Activated CD8-positive, alpha-beta T cell treated with anti-CD3 and anti-CD28 coated beads, Interleukin-2, amount 10 ng/mL, durations not matched to agents 7 days and 5 days (primary cell): ENCODE measurements at regions of chr18 and their contacts with region 1.

Region 1: GRCh38 chr18:63155169-63155852 is 164.3 kb downstream of the BCL2 start:
- DNase-seq: peak; percentile 87
- ATAC-seq: peak; percentile 78
- H3K4me3 Mint-ChIP-seq: peak overlapping the region; percentile 78
- H3K27ac Mint-ChIP-seq: peak overlapping the region; percentile 93
- H3K4me1 Mint-ChIP-seq: peaks cover 98% of the 10 kb centered on the region
- H3K27me3 Mint-ChIP-seq: no peaks in the 10 kb centered on the region

Region 2: DNA sequence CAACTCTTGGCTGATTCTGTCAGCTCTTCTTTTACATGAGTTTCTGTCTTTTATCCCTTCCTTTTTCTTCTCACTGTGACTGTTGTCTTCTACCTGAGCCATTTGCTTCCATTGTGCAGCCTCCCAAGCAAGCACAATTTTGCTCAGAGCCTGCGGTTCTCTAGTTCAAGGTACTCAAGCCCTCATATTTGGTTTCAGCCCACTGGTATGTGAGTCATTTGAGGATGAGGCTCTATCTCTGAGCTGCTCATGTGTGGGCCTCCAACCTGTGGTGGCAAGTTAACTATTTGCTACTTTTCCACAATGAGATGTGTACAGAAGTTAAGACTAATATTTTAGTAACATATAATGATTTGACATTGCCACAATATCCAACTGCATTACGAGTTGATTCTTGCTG is 257.0 kb before region 1 on chr18:
- CTCF ChIA-PET with region 1: no interaction called
- POLR2A ChIA-PET with region 1: no interaction called
- DNase-seq: no peak
- ATAC-seq: no peak
- H3K4me3 Mint-ChIP-seq: no peak overlapping the region
- H3K27ac Mint-ChIP-seq: no peak overlapping the region
- H3K4me1 Mint-ChIP-seq: no peaks in the 10 kb centered on the region
- H3K27me3 Mint-ChIP-seq: no peaks in the 10 kb centered on the region

Region 3: DNA sequence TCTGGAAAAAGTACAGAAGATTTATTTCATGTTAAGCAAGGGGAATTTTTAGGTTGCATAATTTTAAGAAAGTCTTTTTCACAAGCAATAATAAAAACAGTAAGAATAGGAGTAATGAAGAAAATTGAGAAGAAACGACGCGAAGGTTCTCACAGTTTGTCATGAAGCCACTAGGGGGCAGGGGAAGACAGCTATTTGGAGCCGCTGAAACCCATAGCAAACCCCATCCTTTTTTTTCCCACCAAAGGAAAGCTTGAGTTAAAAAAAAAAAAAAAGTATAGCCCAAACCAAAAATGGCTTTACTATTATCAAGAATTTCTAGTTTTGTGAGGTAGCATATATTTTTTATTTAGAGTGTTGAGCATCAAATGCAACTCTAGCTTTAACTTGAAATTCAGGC is 139.0 kb before region 1 on chr18:
- CTCF ChIA-PET with region 1: interaction called, 13 read pairs
- POLR2A ChIA-PET with region 1: no interaction called
- DNase-seq: peak; percentile 66
- ATAC-seq: peak; percentile 57
- H3K4me3 Mint-ChIP-seq: no peak overlapping the region
- H3K27ac Mint-ChIP-seq: no peak overlapping the region
- H3K4me1 Mint-ChIP-seq: no peaks in the 10 kb centered on the region
- H3K27me3 Mint-ChIP-seq: peaks cover 38% of the 10 kb centered on the region

Region 4: GRCh38 chr18:63138436-63139340 is 16.6 kb before region 1 on chr18:
- CTCF ChIA-PET with region 1: interaction called, 108 read pairs
- POLR2A ChIA-PET with region 1: interaction called, 13 read pairs
- DNase-seq: no peak
- ATAC-seq: peak; percentile 54
- H3K4me3 Mint-ChIP-seq: peak overlapping the region; percentile 77
- H3K27ac Mint-ChIP-seq: peak overlapping the region; percentile 95
- H3K4me1 Mint-ChIP-seq: peaks cover 75% of the 10 kb centered on the region
- H3K27me3 Mint-ChIP-seq: no peaks in the 10 kb centered on the region

Region 5: DNA sequence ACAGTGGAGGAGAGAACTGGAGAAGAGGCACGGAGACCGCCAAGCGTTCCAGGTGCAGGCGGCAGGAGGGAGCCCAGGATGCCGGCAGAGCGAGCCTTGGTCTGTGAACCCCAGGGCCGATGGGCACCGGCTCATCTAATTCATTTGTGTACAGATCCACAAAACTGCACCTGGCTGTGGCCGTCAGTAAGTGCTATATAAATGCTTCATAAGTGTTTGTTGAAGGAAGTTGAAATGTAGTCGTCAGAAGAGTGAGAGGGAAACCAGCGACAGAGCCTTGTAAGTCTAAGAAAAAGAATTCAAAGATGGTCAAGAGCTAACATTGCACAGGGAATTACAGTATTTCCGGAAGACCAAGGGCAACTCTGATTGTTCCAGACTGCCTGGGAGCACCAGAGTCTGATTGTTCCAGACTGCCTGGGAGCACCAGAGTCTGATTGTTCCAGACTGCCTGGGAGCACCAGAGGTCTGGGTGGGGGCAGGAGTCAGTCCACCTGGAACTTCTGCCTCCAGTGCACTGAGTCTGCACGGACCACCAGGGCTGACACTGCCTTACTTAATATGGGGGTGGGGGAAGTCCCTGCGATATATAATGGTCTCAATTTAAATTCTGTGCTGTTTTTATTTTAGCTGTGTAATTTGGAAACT is 52.0 kb after region 1 on chr18:
- CTCF ChIA-PET with region 1: interaction called, 26 read pairs
- POLR2A ChIA-PET with region 1: interaction called, 68 read pairs
- DNase-seq: peak; percentile 42
- ATAC-seq: peak; percentile 12
- H3K4me3 Mint-ChIP-seq: peak overlapping the region; percentile 82
- H3K27ac Mint-ChIP-seq: peak overlapping the region; percentile 88
- H3K4me1 Mint-ChIP-seq: peaks cover 90% of the 10 kb centered on the region
- H3K27me3 Mint-ChIP-seq: no peaks in the 10 kb centered on the region

Region 6: GRCh38 chr18:63273222-63273927 is 118.1 kb after region 1 on chr18:
- CTCF ChIA-PET with region 1: no interaction called
- POLR2A ChIA-PET with region 1: no interaction called
- DNase-seq: peak; percentile 44
- ATAC-seq: peak; percentile 69
- H3K4me3 Mint-ChIP-seq: peak overlapping the region; percentile 16
- H3K27ac Mint-ChIP-seq: peak overlapping the region; percentile 49
- H3K4me1 Mint-ChIP-seq: peaks cover 87% of the 10 kb centered on the region
- H3K27me3 Mint-ChIP-seq: no peaks in the 10 kb centered on the region

Region 7: DNA sequence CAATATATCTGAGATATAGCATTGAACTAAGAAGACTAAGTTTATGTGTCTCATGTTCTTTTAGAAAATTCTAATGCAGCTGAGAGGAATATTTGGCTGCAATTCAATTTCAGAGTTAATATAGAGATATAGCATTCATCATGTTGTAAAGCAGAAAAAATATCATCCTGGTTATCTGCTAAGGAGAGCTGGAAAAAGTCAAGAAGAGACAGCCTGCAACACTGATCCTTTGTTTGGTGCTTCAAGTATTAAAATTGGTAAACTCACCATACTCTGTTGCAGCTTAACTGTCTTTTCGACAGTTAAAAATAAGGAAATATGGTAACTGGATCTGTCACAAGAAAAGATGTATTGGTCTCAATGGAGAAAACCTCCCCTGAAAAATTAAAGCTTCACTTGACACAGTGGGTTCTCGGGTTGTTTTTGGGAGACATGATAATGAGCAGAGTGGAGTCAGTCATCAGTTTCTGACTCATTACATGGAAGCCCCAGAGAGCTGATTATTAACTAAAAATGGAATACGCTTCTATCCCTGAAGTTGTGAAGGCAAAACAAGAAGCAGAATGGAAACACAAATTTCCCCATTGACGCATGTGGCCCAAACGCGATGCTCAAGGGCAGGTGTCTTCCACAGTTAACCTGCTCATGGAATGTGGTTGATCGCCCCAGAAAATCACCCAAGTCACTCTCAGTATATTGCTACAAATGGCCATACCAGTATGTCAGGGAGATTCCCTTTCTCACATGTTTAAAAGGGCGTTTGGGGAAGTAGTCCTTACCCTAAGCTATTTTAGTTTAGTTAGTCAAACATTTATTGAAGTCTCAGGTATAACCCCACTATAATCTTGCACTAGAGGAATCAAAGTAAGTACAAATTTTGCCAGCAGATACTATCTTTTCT is 156.1 kb after region 1 on chr18:
- CTCF ChIA-PET with region 1: interaction called, 16 read pairs
- POLR2A ChIA-PET with region 1: interaction called, 3 read pairs
- DNase-seq: no peak
- ATAC-seq: no peak
- H3K4me3 Mint-ChIP-seq: peak overlapping the region; percentile 25
- H3K27ac Mint-ChIP-seq: no peak overlapping the region
- H3K4me1 Mint-ChIP-seq: peaks cover 85% of the 10 kb centered on the region
- H3K27me3 Mint-ChIP-seq: no peaks in the 10 kb centered on the region